ENCODE measurements at regions of chr1 and their contacts with region 1.

Region 1: GRCh38 chr1:84682047-84682446 is 8.2 kb downstream of the SSX2IP start:
- DNase-seq: no peak
- ATAC-seq: no peak
- H3K4me3 ChIP-seq: no peak overlapping the region
- H3K27ac ChIP-seq: no peak overlapping the region
- H3K4me1 ChIP-seq: peaks cover 3% of the 10 kb centered on the region; the same call in 1 of the 2 replicates
- H3K27me3 ChIP-seq: no peaks in the 10 kb centered on the region
- CTCF ChIP-seq: no peak
- EP300 ChIP-seq: no peak
- POLR2A ChIP-seq: no peak
- RAD21 ChIP-seq: no peak

Region 2: DNA sequence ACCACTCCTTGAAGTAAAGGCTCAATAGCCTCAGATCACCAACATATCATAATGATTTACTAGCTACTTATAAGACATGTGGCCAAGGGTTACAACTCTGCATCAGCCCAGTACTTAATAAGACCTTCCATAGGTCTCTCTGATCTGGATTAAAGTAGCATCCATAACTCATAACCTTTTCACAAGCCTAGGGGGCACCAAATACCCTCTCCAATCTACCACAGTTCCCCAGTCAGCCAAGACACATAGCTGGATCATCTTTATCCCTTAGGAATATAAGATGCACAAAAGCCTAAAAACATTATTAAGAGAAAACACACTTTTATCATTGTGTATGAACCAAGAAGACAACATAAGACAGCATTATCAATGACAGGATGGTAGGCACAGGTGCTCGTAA is 13.9 kb before region 1 on chr1:
- CTCF ChIA-PET with region 1: interaction called, 21 read pairs
- POLR2A ChIA-PET with region 1: interaction called, 7 read pairs
- RAD21 ChIA-PET with region 1: interaction called, 17 read pairs
- SMC1A ChIA-PET with region 1: interaction called, 12 read pairs
- in situ Hi-C with region 1: no loop called
- intact Hi-C with region 1: no loop called
- DNase-seq: no peak
- ATAC-seq: peak; percentile 72
- H3K4me3 ChIP-seq: no peak overlapping the region
- H3K27ac ChIP-seq: no peak overlapping the region
- H3K4me1 ChIP-seq: no peaks in the 10 kb centered on the region
- H3K27me3 ChIP-seq: no peaks in the 10 kb centered on the region
- CTCF ChIP-seq: peak in 2 of 3 experiments; percentile 38 to 41; a peak in 4 of 6 replicates
- EP300 ChIP-seq: no peak
- POLR2A ChIP-seq: no peak
- RAD21 ChIP-seq: peak; percentile 58